ENCODE measurements at regions of chr3 and their contacts with region 1.

Region 1: DNA sequence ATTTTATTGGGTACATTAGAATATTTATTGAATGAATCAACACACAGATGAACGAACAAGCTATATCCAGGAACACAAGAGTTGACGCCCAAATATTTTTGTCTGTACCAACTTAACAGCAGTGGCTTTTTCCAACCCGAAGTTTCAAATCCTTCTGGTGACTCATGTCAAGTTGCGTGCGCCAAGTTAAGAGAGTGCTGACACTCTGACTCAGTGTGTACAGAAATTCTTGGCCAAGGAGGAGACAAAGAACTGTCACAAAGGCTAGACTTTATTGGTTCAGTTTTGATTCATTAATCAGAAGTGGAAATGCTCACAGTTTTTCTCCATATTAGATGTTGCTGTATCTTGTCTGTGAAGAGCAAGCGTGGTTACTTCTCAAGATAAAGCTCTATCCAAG is 59.6 kb upstream of the TSC22D2 start:
- DNase-seq: peak; percentile 95
- H3K4me3 ChIP-seq: no peak overlapping the region
- H3K27ac ChIP-seq: peak overlapping the region; percentile 93
- H3K4me1 ChIP-seq: peaks cover 84% of the 10 kb centered on the region
- H3K27me3 ChIP-seq: no peaks in the 10 kb centered on the region
- CTCF ChIP-seq: no peak

Region 2: GRCh38 chr3:150215616-150216015 is 132.9 kb before region 1 on chr3:
- CTCF ChIA-PET with region 1: no interaction called
- dilution Hi-C with region 1: no loop called
- in situ Hi-C with region 1: no loop called
- intact Hi-C with region 1: no loop called
- DNase-seq: peak; percentile 26
- H3K4me3 ChIP-seq: no peak overlapping the region
- H3K27ac ChIP-seq: no peak overlapping the region
- H3K4me1 ChIP-seq: peaks cover 16% of the 10 kb centered on the region
- H3K27me3 ChIP-seq: no peaks in the 10 kb centered on the region
- CTCF ChIP-seq: no peak

Region 3: DNA sequence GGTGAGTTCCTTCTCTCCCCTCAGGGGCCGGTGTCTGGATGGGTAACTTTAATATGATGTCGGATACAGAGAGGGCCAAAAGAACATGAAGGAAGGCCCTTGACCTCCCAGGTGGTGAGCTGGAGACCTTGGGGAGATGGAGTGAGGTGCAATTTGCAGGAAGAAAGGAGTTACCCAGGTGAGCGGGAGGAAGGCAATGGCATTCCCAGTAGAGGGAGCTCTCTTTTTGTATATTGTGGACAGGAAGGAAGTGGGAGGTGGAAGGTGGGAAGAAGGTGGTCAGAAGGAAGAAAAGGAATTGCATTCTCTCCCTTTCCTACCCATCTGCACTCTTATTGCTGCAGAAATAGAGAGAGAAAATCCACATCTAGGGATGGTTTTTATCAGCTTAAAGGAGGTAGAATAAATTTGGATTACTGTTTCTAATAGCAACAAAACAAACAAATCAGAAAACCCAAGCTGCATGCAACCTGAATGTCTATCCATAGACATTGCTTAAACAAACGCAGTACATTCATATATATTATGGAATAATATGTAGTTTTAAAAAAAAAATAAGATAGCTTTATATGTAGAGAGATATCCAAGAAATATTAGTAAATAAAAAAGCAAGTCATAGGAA is 109.4 kb before region 1 on chr3:
- CTCF ChIA-PET with region 1: no interaction called
- dilution Hi-C with region 1: no loop called
- in situ Hi-C with region 1: no loop called
- intact Hi-C with region 1: loop called (anchors 2 kb)
- DNase-seq: peak; percentile 59
- H3K4me3 ChIP-seq: no peak overlapping the region
- H3K27ac ChIP-seq: no peak overlapping the region
- H3K4me1 ChIP-seq: peaks cover 38% of the 10 kb centered on the region
- H3K27me3 ChIP-seq: no peaks in the 10 kb centered on the region
- CTCF ChIP-seq: peak; percentile 62 to 72

Region 4: GRCh38 chr3:150286390-150287147 is 61.9 kb before region 1 on chr3:
- CTCF ChIA-PET with region 1: interaction called, 3 read pairs
- dilution Hi-C with region 1: no loop called
- in situ Hi-C with region 1: no loop called
- intact Hi-C with region 1: loop called (anchors 2 kb)
- DNase-seq: peak; percentile 56
- H3K4me3 ChIP-seq: no peak overlapping the region
- H3K27ac ChIP-seq: no peak overlapping the region
- H3K4me1 ChIP-seq: peaks cover 4% of the 10 kb centered on the region
- H3K27me3 ChIP-seq: no peaks in the 10 kb centered on the region
- CTCF ChIP-seq: peak; percentile 57 to 72

Region 5: GRCh38 chr3:150303776-150304175 is 44.7 kb before region 1 on chr3:
- CTCF ChIA-PET with region 1: no interaction called
- dilution Hi-C with region 1: no loop called
- in situ Hi-C with region 1: no loop called
- intact Hi-C with region 1: loop called (anchors 5 kb)
- DNase-seq: no peak
- H3K4me3 ChIP-seq: no peak overlapping the region
- H3K27ac ChIP-seq: no peak overlapping the region
- H3K4me1 ChIP-seq: peaks cover 14% of the 10 kb centered on the region
- H3K27me3 ChIP-seq: no peaks in the 10 kb centered on the region
- CTCF ChIP-seq: peak; percentile 40 to 47

Region 6: GRCh38 chr3:150319904-150320303 is 28.6 kb before region 1 on chr3:
- CTCF ChIA-PET with region 1: no interaction called
- dilution Hi-C with region 1: no loop called
- in situ Hi-C with region 1: no loop called
- intact Hi-C with region 1: loop called (anchors 1 kb)
- DNase-seq: peak; percentile 98
- H3K4me3 ChIP-seq: no peak overlapping the region
- H3K27ac ChIP-seq: peak overlapping the region; percentile 66
- H3K4me1 ChIP-seq: peaks cover 7% of the 10 kb centered on the region
- H3K27me3 ChIP-seq: no peaks in the 10 kb centered on the region
- CTCF ChIP-seq: no peak

Region 7: GRCh38 chr3:150451329-150452048 is 103.0 kb after region 1 on chr3:
- CTCF ChIA-PET with region 1: no interaction called
- dilution Hi-C with region 1: no loop called
- in situ Hi-C with region 1: no loop called
- intact Hi-C with region 1: no loop called
- DNase-seq: no peak
- H3K4me3 ChIP-seq: no peak overlapping the region
- H3K27ac ChIP-seq: no peak overlapping the region
- H3K4me1 ChIP-seq: peaks cover 33% of the 10 kb centered on the region
- H3K27me3 ChIP-seq: no peaks in the 10 kb centered on the region
- CTCF ChIP-seq: no peak

Measured in mammary epithelial cell (primary cell).